Breast epithelium (tissue), 4 donors: ENCODE measurements at regions of chrX and their contacts with region 1.

Region 1: DNA sequence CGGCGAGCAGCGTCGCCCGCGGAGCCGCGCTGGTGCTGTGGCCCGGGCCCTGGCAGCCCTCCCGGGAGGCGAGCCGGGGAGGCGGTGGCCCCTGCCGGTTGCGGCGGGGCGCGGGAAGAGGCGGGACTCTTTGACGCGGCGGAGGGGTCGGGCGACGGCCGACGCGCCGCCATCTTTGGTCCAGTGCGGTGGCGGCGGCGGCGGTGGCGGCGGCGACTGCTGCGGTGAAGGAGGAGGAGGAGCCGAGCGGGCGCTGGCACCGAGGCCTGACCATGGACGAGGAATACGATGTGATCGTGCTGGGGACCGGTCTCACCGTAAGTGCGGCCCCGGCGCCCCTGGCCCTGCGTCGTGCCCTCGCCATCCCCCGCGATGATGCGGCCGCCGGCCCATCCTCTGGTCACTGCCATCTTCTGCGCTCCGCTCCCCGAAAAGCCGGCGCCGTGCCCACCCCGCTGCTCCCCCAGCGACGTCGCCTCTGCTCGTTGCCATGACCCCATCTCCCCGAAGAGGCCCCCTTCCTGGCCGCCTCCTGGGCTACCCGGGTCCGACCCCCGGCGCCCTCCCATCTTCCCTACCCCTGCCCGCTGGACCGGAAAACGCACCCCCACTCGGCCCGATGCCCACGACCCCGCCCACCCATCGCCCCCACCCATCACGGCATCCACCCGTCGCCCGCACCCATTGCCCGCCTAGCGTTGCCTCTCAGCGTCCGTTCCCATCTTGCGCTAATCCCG is at the start of gene GDI1:
- DNase-seq: no peak
- H3K4me3 ChIP-seq: peak within 1 kb of the TSS; percentile 63 to 89 (median 70)
- H3K27ac ChIP-seq: peak within 1 kb of the TSS; percentile 84 to 96
- H3K4me1 ChIP-seq: no peaks in the 10 kb centered on the region
- H3K27me3 ChIP-seq: peaks cover 0 to 50% of the 10 kb centered on the region in 2 donors
- CTCF ChIP-seq: no peak
- POLR2A ChIP-seq: no peak
- total RNA-seq, gene GDI1: 94.0 to 105 (median 97.3) TPM

Region 2: DNA sequence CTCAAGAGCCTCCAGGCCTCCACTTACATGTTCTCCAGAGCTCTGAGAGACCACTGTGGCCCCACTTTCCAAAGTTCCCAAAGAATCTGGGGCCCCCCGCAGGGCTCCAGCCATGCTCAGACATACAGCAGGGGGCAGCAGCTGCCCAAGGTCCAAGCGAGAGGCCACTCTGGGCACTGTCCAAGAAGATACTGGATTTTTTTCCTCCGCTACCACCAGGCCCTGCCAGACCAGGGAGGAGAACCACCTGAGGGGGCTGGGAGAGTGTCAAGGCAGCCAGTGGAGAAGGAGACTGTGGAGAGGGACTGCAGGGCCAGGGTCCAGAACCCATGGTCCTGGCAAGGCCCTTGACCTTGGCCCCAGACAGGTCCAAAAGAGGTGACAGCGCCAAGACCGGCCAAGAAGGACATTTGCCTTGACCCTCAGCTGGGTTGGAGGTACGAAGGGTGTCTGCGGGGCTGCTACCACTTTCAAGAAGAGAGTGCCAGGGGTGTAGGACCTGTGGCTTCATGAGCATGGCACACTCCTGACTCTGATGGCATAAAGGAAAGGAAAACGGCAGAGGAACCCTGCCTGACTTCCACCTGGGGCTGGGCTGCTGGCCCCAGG is 52.8 kb before region 1 on chrX:
- intact Hi-C with region 1: no loop called
- DNase-seq: no peak
- H3K4me3 ChIP-seq: no peak overlapping the region
- H3K27ac ChIP-seq: no peak overlapping the region
- H3K4me1 ChIP-seq: no peaks in the 10 kb centered on the region
- H3K27me3 ChIP-seq: peaks cover 0 to 11% of the 10 kb centered on the region in 2 donors
- CTCF ChIP-seq: no peak
- POLR2A ChIP-seq: no peak

Region 3: DNA sequence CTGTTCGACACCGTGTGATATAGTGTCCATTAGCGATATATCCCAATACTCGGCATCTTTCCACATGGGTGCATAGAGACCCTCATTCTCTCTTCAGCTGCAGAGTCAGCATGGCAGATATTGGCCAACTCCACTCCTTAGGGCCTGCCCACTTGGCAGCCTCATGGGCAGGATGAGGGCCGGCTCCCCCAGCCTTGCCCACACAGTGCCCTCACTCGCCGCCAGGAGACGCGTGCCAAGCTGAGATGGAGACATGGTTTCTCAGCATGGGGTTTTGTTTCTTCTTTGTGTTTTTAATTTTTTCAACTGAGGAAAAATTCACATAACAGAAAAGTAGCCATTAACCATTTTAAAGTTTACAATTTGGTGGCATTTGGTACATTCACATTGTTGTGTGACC is 15.7 kb after region 1 on chrX:
- intact Hi-C with region 1: loop called (anchors 1 kb)
- DNase-seq: no peak
- H3K4me3 ChIP-seq: no peak overlapping the region
- H3K27ac ChIP-seq: no peak overlapping the region
- H3K4me1 ChIP-seq: no peaks in the 10 kb centered on the region
- H3K27me3 ChIP-seq: peaks cover 0 to 23% of the 10 kb centered on the region in 2 donors
- CTCF ChIP-seq: no peak
- POLR2A ChIP-seq: no peak